GM12878 (cell line): ENCODE measurements at regions of chr9 and their contacts with region 1.

Region 1: DNA sequence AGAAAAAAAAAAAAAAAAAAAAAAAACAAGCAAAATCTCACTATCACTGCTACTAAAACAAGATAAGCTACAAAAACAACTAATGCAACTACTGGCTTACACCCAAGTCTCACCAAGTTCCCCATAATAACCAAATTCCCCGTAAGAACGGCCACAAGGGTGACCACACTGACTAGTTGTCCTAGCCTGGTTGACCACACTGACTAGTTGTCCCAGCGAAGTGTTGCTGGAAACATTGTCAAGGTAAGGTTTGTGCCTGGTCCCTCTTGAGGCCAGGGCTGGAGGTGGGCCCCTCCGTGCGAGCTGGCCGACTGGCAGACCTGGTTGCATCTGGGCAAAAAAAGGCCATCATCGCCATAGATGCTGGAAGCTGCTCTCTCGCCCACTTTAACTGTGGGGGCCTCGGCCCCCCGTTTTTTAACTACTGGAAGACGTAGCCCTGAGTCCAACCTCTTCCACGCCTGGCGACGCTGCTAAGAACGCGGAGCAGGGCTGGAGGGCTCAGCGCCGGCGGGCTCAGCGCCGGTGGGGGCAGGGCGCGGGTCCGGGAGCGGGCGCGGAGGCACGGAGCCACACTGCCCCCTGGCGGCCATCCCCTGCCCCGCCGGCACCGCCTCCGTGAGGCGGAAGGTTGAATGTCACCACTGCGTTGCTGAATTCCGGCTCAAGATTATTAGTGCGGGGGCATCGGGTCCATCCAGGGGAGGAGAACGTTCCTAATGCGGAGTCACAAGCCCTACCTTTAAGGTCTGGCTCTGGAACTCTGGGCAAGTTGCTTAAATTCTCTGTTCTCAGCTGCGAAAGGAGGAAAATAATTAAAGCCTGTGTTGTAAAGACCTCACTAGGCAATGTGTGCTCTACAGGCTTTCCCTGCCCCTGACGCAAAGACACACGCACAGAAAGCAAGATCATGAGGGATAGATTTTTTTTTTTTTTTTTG is 84.0 kb downstream of the HSD17B3 start:
- DNase-seq: no peak
- ATAC-seq: peak; percentile 98
- H3K4me3 ChIP-seq: no peak overlapping the region
- H3K27ac ChIP-seq: no peak overlapping the region
- H3K4me1 ChIP-seq: peaks cover 6% of the 10 kb centered on the region
- H3K27me3 ChIP-seq: peaks cover 0 to 2% of the 10 kb centered on the region in 2 experiments; a peak in 1 of 4 replicates
- CTCF ChIP-seq: peak; percentile 92 to 97 (median 93)
- EP300 ChIP-seq: no peak
- POLR2A ChIP-seq: no peak
- RAD21 ChIP-seq: peak; percentile 66

Region 2: GRCh38 chr9:95383185-95383673 is 834.8 kb before region 1 on chr9:
- CTCF ChIA-PET with region 1: no interaction called
- POLR2A ChIA-PET with region 1: no interaction called
- RAD21 ChIA-PET with region 1: no interaction called
- SMC1A ChIA-PET with region 1: interaction called, 5 read pairs
- in situ Hi-C with region 1: no loop called
- intact Hi-C with region 1: loop called (anchors 10 kb)
- DNase-seq: no peak
- ATAC-seq: no peak
- H3K4me3 ChIP-seq: no peak overlapping the region
- H3K27ac ChIP-seq: no peak overlapping the region
- H3K4me1 ChIP-seq: no peaks in the 10 kb centered on the region; the same call in 1 of the 2 replicates
- H3K27me3 ChIP-seq: no peaks in the 10 kb centered on the region; a peak in 1 of 4 replicates
- CTCF ChIP-seq: no peak
- EP300 ChIP-seq: no peak
- POLR2A ChIP-seq: no peak
- RAD21 ChIP-seq: no peak

Region 3: GRCh38 chr9:95726756-95727155 is 491.3 kb before region 1 on chr9:
- CTCF ChIA-PET with region 1: interaction called, 6 read pairs
- POLR2A ChIA-PET with region 1: no interaction called
- RAD21 ChIA-PET with region 1: interaction called, 15 read pairs
- SMC1A ChIA-PET with region 1: interaction called, 6 read pairs
- in situ Hi-C with region 1: no loop called
- intact Hi-C with region 1: loop called (anchors 5 kb)
- DNase-seq: no peak
- ATAC-seq: peak; percentile 50; the same call in 2 of the 3 replicates
- H3K4me3 ChIP-seq: no peak overlapping the region
- H3K27ac ChIP-seq: no peak overlapping the region
- H3K4me1 ChIP-seq: peaks cover 13% of the 10 kb centered on the region
- H3K27me3 ChIP-seq: no peaks in the 10 kb centered on the region
- CTCF ChIP-seq: peak; percentile 44 to 58 (median 50); a peak in 5 of 6 replicates
- EP300 ChIP-seq: no peak
- POLR2A ChIP-seq: no peak
- RAD21 ChIP-seq: peak; percentile 54

Region 4: DNA sequence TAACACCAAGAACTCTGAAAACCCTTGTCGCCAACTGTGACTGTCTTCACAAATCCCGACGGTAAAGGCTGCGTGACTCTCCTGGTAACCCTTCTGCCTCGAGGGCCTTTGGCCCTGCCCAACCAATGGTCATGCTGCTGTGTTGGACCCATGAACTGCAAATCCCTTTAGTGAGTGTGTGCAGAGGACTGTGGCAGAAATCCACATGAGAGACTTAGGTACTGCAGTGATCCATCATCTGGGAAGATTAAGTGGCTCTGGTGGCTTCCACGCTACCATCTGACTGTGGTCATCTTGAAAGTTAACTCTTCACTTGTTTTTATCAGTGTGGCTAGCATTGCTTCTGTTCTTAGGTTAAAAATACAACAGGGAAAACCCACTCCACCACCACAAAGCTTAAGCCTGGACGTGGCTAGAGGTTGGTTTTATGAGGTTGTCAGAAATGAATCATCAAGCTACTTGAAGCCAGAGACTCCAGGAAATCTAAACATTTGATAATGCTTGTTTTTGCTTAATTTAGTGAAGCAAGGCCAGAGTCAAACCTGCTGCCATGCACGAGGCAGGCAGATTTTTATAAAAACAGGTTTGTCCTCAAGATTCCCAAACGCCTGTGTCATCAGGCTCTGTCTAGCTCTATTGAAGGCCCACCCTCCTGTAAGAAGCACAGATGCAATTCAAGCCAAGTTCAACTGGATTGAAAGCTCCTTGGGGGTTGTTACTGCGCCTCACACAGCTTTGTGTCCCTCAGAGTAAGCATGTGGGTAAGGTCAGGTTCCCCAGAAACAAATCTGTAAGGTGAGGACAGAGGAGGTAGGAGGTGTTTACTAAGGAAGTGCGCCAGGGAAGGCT is 395.2 kb before region 1 on chr9:
- CTCF ChIA-PET with region 1: no interaction called
- POLR2A ChIA-PET with region 1: no interaction called
- RAD21 ChIA-PET with region 1: no interaction called
- SMC1A ChIA-PET with region 1: interaction called, 3 read pairs
- in situ Hi-C with region 1: no loop called
- intact Hi-C with region 1: loop called (anchors 10 kb)
- DNase-seq: peak; percentile 84
- ATAC-seq: peak; percentile 96
- H3K4me3 ChIP-seq: peak overlapping the region; percentile 32; the same call in 1 of the 2 replicates
- H3K27ac ChIP-seq: 0 out of 2 replicates have a peak overlapping the region, but pooled peaks have one; percentile 15
- H3K4me1 ChIP-seq: peaks cover 25% of the 10 kb centered on the region
- H3K27me3 ChIP-seq: peaks cover 0 to 3% of the 10 kb centered on the region in 2 experiments; a peak in 3 of 4 replicates
- CTCF ChIP-seq: no peak
- EP300 ChIP-seq: peak; percentile 81 to 85; a peak in 3 of 4 replicates
- POLR2A ChIP-seq: no peak
- RAD21 ChIP-seq: no peak

Region 5: GRCh38 chr9:96061293-96061987 is 156.6 kb before region 1 on chr9:
- CTCF ChIA-PET with region 1: no interaction called
- POLR2A ChIA-PET with region 1: no interaction called
- RAD21 ChIA-PET with region 1: interaction called, 6 read pairs
- SMC1A ChIA-PET with region 1: no interaction called
- in situ Hi-C with region 1: no loop called
- intact Hi-C with region 1: loop called (anchors 10 kb)
- DNase-seq: no peak
- ATAC-seq: peak; percentile 48; the same call in 1 of the 3 replicates
- H3K4me3 ChIP-seq: no peak overlapping the region
- H3K27ac ChIP-seq: no peak overlapping the region
- H3K4me1 ChIP-seq: no peaks in the 10 kb centered on the region
- H3K27me3 ChIP-seq: no peaks in the 10 kb centered on the region; a peak in 1 of 4 replicates
- CTCF ChIP-seq: peak; percentile 25 to 44 (median 30); a peak in 4 of 6 replicates
- EP300 ChIP-seq: no peak
- POLR2A ChIP-seq: no peak
- RAD21 ChIP-seq: peak; percentile 69

Region 6: GRCh38 chr9:96136992-96137670 is 80.9 kb before region 1 on chr9:
- CTCF ChIA-PET with region 1: interaction called, 3 read pairs
- POLR2A ChIA-PET with region 1: no interaction called
- RAD21 ChIA-PET with region 1: no interaction called
- SMC1A ChIA-PET with region 1: no interaction called
- in situ Hi-C with region 1: no loop called
- intact Hi-C with region 1: loop called (anchors 5 kb)
- DNase-seq: peak; percentile 69
- ATAC-seq: peak; percentile 98
- H3K4me3 ChIP-seq: peak overlapping the region; percentile 21; the same call in 1 of the 2 replicates
- H3K27ac ChIP-seq: peak overlapping the region; percentile 66
- H3K4me1 ChIP-seq: peaks cover 21% of the 10 kb centered on the region
- H3K27me3 ChIP-seq: no peaks in the 10 kb centered on the region
- CTCF ChIP-seq: no peak
- EP300 ChIP-seq: no peak
- POLR2A ChIP-seq: peak; percentile 51; the same call in 1 of the 2 replicates
- RAD21 ChIP-seq: no peak

Region 7: GRCh38 chr9:96256800-96257199 is 38.8 kb after region 1 on chr9:
- CTCF ChIA-PET with region 1: no interaction called
- POLR2A ChIA-PET with region 1: no interaction called
- RAD21 ChIA-PET with region 1: no interaction called
- SMC1A ChIA-PET with region 1: no interaction called
- in situ Hi-C with region 1: no loop called
- intact Hi-C with region 1: no loop called
- DNase-seq: no peak
- ATAC-seq: no peak
- H3K4me3 ChIP-seq: no peak overlapping the region
- H3K27ac ChIP-seq: no peak overlapping the region
- H3K4me1 ChIP-seq: peaks cover 5% of the 10 kb centered on the region; the same call in 1 of the 2 replicates
- H3K27me3 ChIP-seq: peaks cover 2% of the 10 kb centered on the region in 2 experiments; a peak in 2 of 4 replicates
- CTCF ChIP-seq: no peak
- EP300 ChIP-seq: no peak
- POLR2A ChIP-seq: no peak
- RAD21 ChIP-seq: no peak